K562 (cell line): ENCODE measurements at regions of chr3 and their contacts with region 1.

Region 1: GRCh38 chr3:139329345-139329850 is 14.4 kb upstream of the MRPS22 start:
- DNase-seq: peak; percentile 93 to 96 (median 94)
- ATAC-seq: peak; percentile 99
- H3K4me3 ChIP-seq: 0 out of 2 replicates have a peak overlapping the region, but pooled peaks have one; percentile 18
- H3K27ac ChIP-seq: no peak overlapping the region; the same call in 2 of the 3 replicates
- H3K4me1 ChIP-seq: peaks cover 17 to 29% of the 10 kb centered on the region in 2 experiments; a peak in 4 of 5 replicates
- H3K27me3 ChIP-seq: no peaks in the 10 kb centered on the region
- CTCF ChIP-seq: peak; percentile 99 to 100 (median 100)
- EP300 ChIP-seq: peak; percentile 25; the same call in 1 of the 2 replicates
- POLR2A ChIP-seq: no peak
- RAD21 ChIP-seq: peak; percentile 99 to 100

Region 2: GRCh38 chr3:139101396-139101795 is 228.0 kb before region 1 on chr3:
- CTCF ChIA-PET with region 1: no interaction called
- POLR2A ChIA-PET with region 1: no interaction called
- in situ Hi-C with region 1: loop called (anchors 5 kb)
- intact Hi-C with region 1: no loop called
- DNase-seq: no peak
- ATAC-seq: no peak
- H3K4me3 ChIP-seq: no peak overlapping the region
- H3K27ac ChIP-seq: no peak overlapping the region
- H3K4me1 ChIP-seq: no peaks in the 10 kb centered on the region
- H3K27me3 ChIP-seq: no peaks in the 10 kb centered on the region; a peak in 1 of 5 replicates
- CTCF ChIP-seq: no peak
- EP300 ChIP-seq: no peak
- POLR2A ChIP-seq: no peak
- RAD21 ChIP-seq: no peak

Region 3: GRCh38 chr3:139202226-139202958 is 127.0 kb before region 1 on chr3:
- CTCF ChIA-PET with region 1: no interaction called
- POLR2A ChIA-PET with region 1: no interaction called
- in situ Hi-C with region 1: no loop called
- intact Hi-C with region 1: loop called (anchors 5 kb)
- DNase-seq: peak; percentile 36 to 80 (median 60)
- ATAC-seq: peak; percentile 96
- H3K4me3 ChIP-seq: no peak overlapping the region
- H3K27ac ChIP-seq: no peak overlapping the region; the same call in 2 of the 3 replicates
- H3K4me1 ChIP-seq: peaks cover 0 to 17% of the 10 kb centered on the region in 2 experiments; a peak in 3 of 5 replicates
- H3K27me3 ChIP-seq: no peaks in the 10 kb centered on the region
- CTCF ChIP-seq: peak; percentile 71 to 75 (median 71)
- EP300 ChIP-seq: no peak
- POLR2A ChIP-seq: no peak
- RAD21 ChIP-seq: peak; percentile 85 to 86

Region 4: GRCh38 chr3:139213936-139214335 is 115.5 kb before region 1 on chr3:
- CTCF ChIA-PET with region 1: no interaction called
- POLR2A ChIA-PET with region 1: no interaction called
- in situ Hi-C with region 1: no loop called
- intact Hi-C with region 1: no loop called
- DNase-seq: no peak
- ATAC-seq: no peak
- H3K4me3 ChIP-seq: no peak overlapping the region
- H3K27ac ChIP-seq: no peak overlapping the region
- H3K4me1 ChIP-seq: no peaks in the 10 kb centered on the region; a peak in 1 of 5 replicates
- H3K27me3 ChIP-seq: no peaks in the 10 kb centered on the region; a peak in 1 of 5 replicates
- CTCF ChIP-seq: no peak
- EP300 ChIP-seq: no peak
- POLR2A ChIP-seq: no peak
- RAD21 ChIP-seq: no peak

Region 5: DNA sequence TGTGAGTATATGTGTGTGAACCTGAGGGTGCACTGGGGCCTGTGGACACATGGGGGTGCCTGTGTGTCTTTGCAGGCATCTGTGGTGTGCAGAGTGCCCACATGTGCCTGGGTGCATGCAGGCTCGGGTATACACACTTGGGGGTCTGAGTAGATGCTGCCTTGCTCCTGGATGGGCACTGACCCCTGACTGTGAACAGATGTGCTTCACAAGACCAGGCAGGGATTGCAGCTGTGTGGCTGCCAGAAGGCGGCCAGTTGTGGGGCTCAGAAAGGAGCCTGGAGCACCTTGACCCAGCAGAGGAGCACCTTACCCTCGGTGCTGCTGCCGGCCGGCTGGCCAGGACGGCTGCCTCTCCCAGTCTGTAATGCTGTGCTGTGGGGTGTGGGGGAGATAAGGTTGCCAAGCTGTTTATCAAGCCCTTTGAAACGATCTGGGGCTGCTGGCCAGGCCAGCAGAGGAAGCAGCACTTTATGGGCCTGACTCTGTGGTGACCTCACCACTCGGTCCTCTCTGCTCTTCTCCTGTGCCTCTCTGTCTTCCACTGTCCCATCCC is 41.1 kb before region 1 on chr3:
- CTCF ChIA-PET with region 1: interaction called, 5 read pairs
- POLR2A ChIA-PET with region 1: interaction called, 3 read pairs
- in situ Hi-C with region 1: no loop called
- intact Hi-C with region 1: loop called (anchors 2 kb)
- DNase-seq: peak; percentile 67 to 91 (median 76)
- ATAC-seq: peak; percentile 93
- H3K4me3 ChIP-seq: no peak overlapping the region
- H3K27ac ChIP-seq: no peak overlapping the region; the same call in 2 of the 3 replicates
- H3K4me1 ChIP-seq: peaks cover 32 to 42% of the 10 kb centered on the region in 2 experiments; a peak in 4 of 5 replicates
- H3K27me3 ChIP-seq: no peaks in the 10 kb centered on the region
- CTCF ChIP-seq: peak; percentile 27 to 40 (median 31); a peak in 5 of 6 replicates
- EP300 ChIP-seq: peak; percentile 84
- POLR2A ChIP-seq: no peak
- RAD21 ChIP-seq: peak in 1 of 2 experiments; percentile 33; a peak in 2 of 4 replicates